Aorta (tissue), 5 donors: ENCODE measurements at regions of chr15 and their contacts with region 1.

Region 1: DNA sequence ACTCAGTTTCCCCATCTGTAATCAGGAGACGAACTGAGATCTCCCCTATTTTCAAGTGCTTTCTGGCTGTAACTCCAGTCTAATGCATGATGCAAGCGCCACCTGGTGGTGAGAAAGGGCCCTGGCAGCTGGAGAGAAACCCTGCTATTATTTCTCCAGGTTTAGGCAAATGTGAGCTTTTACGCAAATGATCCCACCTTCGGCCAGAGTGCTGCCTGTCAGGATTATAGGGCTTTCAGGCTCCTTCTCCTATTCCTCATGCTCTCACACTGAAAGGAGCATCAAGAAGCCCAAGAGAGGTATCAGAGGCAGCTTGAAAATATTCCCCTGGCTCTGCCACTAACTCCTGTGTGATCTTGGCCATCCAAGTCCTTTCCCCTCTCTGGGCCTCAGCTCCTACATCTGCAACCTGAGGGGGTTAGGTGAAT is 93.9 kb upstream of the RASGRF1 start:
- DNase-seq: peak; percentile 81 to 89
- ATAC-seq: no peak
- H3K4me3 ChIP-seq: no peak overlapping the region
- H3K27ac ChIP-seq: no peak overlapping the region
- H3K4me1 ChIP-seq: no peaks in the 10 kb centered on the region
- H3K27me3 ChIP-seq: no peaks in the 10 kb centered on the region

Region 2: GRCh38 chr15:78618490-78618934 is 566.0 kb before region 1 on chr15:
- intact Hi-C with region 1: loop called (anchors 5 to 10 kb)
- DNase-seq: peak; percentile 89 to 92
- ATAC-seq: peak; percentile 75
- H3K4me3 ChIP-seq: no peak overlapping the region
- H3K27ac ChIP-seq: no peak overlapping the region
- H3K4me1 ChIP-seq: no peaks in the 10 kb centered on the region
- H3K27me3 ChIP-seq: no peaks in the 10 kb centered on the region

Region 3: GRCh38 chr15:78640840-78641719 is 543.4 kb before region 1 on chr15 and contains the start of gene CHRNB4:
- intact Hi-C with region 1: loop called in 1 of 2 experiments (anchors 10 kb)
- DNase-seq: peak in 1 of 2 donors; percentile 75
- ATAC-seq: peak; percentile 61
- H3K4me3 ChIP-seq: peak within 1 kb of the TSS in 1 of 2 donors; percentile 30
- H3K27ac ChIP-seq: no peak within 1 kb of the TSS
- H3K4me1 ChIP-seq: peaks cover 0 to 3% of the 10 kb centered on the region in 2 donors
- H3K27me3 ChIP-seq: no peaks in the 10 kb centered on the region
- total RNA-seq, gene CHRNB4: not detected

Region 4: GRCh38 chr15:78909791-78910228 is 274.7 kb before region 1 on chr15:
- intact Hi-C with region 1: loop called (anchors 2 to 10 kb)
- DNase-seq: no peak
- ATAC-seq: peak; percentile 53
- H3K4me3 ChIP-seq: no peak overlapping the region
- H3K27ac ChIP-seq: no peak overlapping the region
- H3K4me1 ChIP-seq: peaks cover 0 to 5% of the 10 kb centered on the region in 2 donors
- H3K27me3 ChIP-seq: no peaks in the 10 kb centered on the region

Region 5: GRCh38 chr15:79028411-79028964 is 156.0 kb before region 1 on chr15:
- intact Hi-C with region 1: loop called in 1 of 2 experiments (anchors 2 kb)
- DNase-seq: peak; percentile 38
- ATAC-seq: no peak
- H3K4me3 ChIP-seq: no peak overlapping the region
- H3K27ac ChIP-seq: no peak overlapping the region
- H3K4me1 ChIP-seq: no peaks in the 10 kb centered on the region
- H3K27me3 ChIP-seq: no peaks in the 10 kb centered on the region

Region 6: GRCh38 chr15:79230766-79231165 is 46.3 kb after region 1 on chr15:
- intact Hi-C with region 1: no loop called
- DNase-seq: no peak
- ATAC-seq: no peak
- H3K4me3 ChIP-seq: no peak overlapping the region
- H3K27ac ChIP-seq: no peak overlapping the region
- H3K4me1 ChIP-seq: no peaks in the 10 kb centered on the region
- H3K27me3 ChIP-seq: no peaks in the 10 kb centered on the region

Region 7: GRCh38 chr15:79370716-79371115 is 186.2 kb after region 1 on chr15:
- intact Hi-C with region 1: no loop called
- DNase-seq: no peak
- ATAC-seq: no peak
- H3K4me3 ChIP-seq: no peak overlapping the region
- H3K27ac ChIP-seq: no peak overlapping the region
- H3K4me1 ChIP-seq: no peaks in the 10 kb centered on the region
- H3K27me3 ChIP-seq: no peaks in the 10 kb centered on the region

Region 8: DNA sequence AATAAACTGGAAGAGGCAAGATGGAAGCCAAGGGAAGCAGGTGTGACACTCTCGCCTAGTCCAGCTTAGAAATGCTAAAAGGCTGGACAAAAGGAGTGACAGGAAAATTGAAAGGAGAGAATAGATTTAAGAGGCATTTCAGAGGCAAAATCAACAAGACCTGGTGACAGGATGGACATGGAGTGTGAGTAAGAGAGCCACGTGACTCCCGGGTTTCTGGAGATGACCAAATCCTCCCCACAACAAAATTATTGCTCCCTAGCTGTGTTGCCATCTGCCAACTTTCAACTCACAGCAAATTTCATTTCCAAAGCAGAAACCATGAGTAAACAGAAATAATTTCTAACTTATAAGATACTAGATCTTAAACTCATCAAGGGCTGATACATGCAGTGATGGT is 659.7 kb after region 1 on chr15:
- intact Hi-C with region 1: no loop called
- DNase-seq: no peak
- ATAC-seq: no peak
- H3K4me3 ChIP-seq: no peak overlapping the region
- H3K27ac ChIP-seq: no peak overlapping the region
- H3K4me1 ChIP-seq: no peaks in the 10 kb centered on the region
- H3K27me3 ChIP-seq: no peaks in the 10 kb centered on the region